ENCODE measurements at regions of chr10 and their contacts with region 1.

Region 1: DNA sequence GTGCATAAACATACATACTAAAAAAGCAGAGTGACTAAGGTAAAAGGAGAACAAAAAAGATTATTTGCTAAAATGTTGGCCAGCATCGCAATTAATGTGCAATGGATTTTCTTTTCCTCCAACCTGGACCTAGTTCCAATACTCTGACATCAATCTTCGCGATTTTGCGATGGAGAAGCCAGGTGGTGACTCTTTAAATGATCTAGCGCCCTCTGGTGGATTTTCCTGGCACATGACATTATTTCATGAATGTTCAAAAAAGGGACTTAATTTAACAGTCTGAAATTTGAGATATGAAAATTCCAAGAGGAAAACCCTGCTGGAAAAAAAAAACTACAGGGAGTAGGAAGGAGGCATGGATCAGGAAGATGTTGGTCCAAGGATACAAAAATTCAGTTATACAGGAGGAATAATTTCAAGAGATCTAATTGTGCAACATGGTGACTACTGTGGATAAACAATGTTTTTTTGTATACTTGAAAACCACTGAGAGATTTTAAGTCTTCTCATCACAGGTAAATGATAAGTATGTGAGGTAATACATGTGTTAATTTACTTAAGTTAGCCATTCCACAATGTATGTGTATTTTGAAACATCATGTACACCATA is 4.3 kb upstream of the KCNMA1 start:
- DNase-seq: peak; percentile 72
- H3K4me3 ChIP-seq: no peak overlapping the region; a peak in 1 of 4 replicates
- H3K27ac ChIP-seq: no peak overlapping the region
- H3K4me1 ChIP-seq: peaks cover 0 to 10% of the 10 kb centered on the region in 2 experiments; a peak in 2 of 4 replicates
- H3K27me3 ChIP-seq: no peaks in the 10 kb centered on the region
- CTCF ChIP-seq: peak; percentile 90
- EP300 ChIP-seq: no peak
- RAD21 ChIP-seq: peak; percentile 99

Region 2: DNA sequence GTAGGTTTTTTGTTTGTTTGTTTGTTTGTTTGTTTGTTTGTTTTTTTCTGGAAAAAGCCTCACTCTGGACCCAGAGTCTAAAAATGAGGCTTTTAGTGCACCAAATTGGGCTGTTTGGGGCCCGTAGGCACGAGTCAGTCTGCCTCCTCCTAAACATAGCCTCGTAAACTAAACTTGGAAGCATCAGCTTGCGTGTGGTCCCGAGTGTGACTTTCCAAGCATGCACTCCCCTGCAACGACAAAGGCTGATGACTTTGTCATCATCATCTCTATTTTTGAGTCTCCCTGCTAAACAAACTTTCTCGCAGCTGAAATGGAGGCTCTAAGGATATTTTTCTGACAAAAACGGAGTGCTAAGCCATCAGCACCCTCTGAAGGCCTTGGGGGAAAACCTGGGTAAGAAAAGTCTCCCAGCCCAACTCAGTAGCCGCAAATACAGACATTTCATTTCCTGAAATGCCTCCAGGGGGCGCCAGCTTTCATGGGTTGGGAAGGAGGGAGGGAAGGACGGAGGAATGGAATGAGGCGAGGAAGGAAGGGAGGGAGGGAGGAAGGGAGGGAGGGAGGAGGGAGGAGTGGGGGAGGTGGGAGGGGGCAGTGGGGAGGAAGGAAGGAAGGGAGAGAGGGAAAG is 250.2 kb before region 1 on chr10:
- CTCF ChIA-PET with region 1: interaction called, 96 read pairs
- POLR2A ChIA-PET with region 1: no interaction called
- DNase-seq: peak; percentile 66
- H3K4me3 ChIP-seq: no peak overlapping the region
- H3K27ac ChIP-seq: peak overlapping the region; percentile 78 to 95
- H3K4me1 ChIP-seq: peaks cover 49 to 57% of the 10 kb centered on the region in 2 experiments
- H3K27me3 ChIP-seq: no peaks in the 10 kb centered on the region
- CTCF ChIP-seq: peak; percentile 75
- EP300 ChIP-seq: no peak; a peak in 1 of 4 replicates
- RAD21 ChIP-seq: peak; percentile 78

Region 3: DNA sequence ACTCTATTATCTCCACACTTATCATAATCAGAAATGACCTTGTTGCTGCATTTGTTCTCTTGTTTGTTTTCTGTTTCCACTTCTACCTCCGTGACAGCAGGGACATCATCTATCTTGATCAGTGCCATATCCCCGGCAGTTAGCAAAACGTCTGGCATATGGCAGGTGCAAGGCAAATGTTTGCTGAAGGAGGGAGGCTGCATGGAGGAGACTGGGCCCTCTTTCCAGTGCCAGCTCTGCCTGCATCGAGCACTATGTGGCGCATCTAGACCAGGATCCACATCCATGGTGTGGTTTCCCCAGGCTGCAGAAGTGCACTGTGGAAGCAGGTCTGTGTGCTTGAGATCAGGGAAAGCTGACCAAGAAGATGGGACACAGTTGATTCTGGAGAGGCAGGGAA is 185.5 kb before region 1 on chr10:
- CTCF ChIA-PET with region 1: interaction called, 20 read pairs
- POLR2A ChIA-PET with region 1: no interaction called
- DNase-seq: peak; percentile 49
- H3K4me3 ChIP-seq: no peak overlapping the region
- H3K27ac ChIP-seq: peak overlapping the region in 1 of 2 experiments; percentile 62; a peak in 1 of 4 replicates
- H3K4me1 ChIP-seq: peaks cover 0 to 18% of the 10 kb centered on the region in 2 experiments; a peak in 2 of 4 replicates
- H3K27me3 ChIP-seq: no peaks in the 10 kb centered on the region
- CTCF ChIP-seq: no peak
- EP300 ChIP-seq: peak in 1 of 2 experiments; percentile 34; a peak in 2 of 4 replicates
- RAD21 ChIP-seq: peak; percentile 78

Region 4: DNA sequence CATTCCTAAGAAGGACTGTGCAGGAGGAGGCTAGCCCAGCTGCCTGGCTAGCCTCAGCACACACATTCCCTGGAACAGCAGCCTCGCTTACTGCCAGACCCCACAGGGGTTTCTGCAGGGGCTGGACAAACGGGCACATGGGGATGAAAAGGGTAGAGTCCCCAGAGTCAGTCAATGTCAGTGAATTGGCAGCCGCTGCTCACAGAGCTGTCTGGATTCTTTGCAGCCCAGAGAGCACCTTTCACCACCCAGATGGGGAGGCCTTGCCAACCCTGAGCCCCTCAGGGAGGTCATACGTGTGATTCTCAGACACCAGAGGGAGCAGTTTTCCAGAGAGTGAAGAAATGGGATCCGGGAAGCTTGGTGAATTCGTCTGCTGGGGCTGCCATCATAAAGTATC is 147.6 kb before region 1 on chr10:
- CTCF ChIA-PET with region 1: interaction called, 47 read pairs
- POLR2A ChIA-PET with region 1: no interaction called
- DNase-seq: peak; percentile 69
- H3K4me3 ChIP-seq: no peak overlapping the region
- H3K27ac ChIP-seq: no peak overlapping the region
- H3K4me1 ChIP-seq: peaks cover 9 to 20% of the 10 kb centered on the region in 2 experiments; a peak in 3 of 4 replicates
- H3K27me3 ChIP-seq: no peaks in the 10 kb centered on the region
- CTCF ChIP-seq: peak; percentile 58
- EP300 ChIP-seq: no peak
- RAD21 ChIP-seq: peak; percentile 71

Region 5: DNA sequence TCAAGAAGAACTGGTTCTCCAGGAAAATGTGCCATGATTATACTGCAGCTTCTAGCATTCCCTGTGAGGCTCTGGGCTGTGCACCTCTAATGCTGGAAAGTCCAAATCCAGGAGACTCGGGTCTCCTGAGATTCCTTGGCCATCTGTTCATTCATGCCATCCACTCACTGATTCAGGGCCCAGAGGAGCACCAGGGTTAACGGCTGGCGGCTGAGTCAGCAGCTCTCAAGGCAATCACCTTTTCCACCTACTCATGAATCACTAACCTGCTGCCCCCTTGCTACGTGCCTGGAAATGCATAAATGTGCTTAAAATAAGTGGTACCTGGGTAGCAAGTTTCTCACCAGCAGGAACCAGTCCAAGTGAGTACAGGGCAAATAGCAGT is 137.0 kb before region 1 on chr10:
- CTCF ChIA-PET with region 1: interaction called, 17 read pairs
- POLR2A ChIA-PET with region 1: no interaction called
- DNase-seq: no peak
- H3K4me3 ChIP-seq: no peak overlapping the region
- H3K27ac ChIP-seq: peak overlapping the region; percentile 76 to 91; a peak in 3 of 4 replicates
- H3K4me1 ChIP-seq: peaks cover 23 to 58% of the 10 kb centered on the region in 2 experiments
- H3K27me3 ChIP-seq: no peaks in the 10 kb centered on the region
- CTCF ChIP-seq: peak; percentile 11; the same call in 1 of the 2 replicates
- EP300 ChIP-seq: peak in 1 of 2 experiments; percentile 78; a peak in 1 of 4 replicates
- RAD21 ChIP-seq: no peak

Measured in SK-N-SH (cell line).